Panc1 (cell line): ENCODE measurements at regions of chr2 and their contacts with region 1.

Region 1: GRCh38 chr2:191710411-191710900 is 32.5 kb downstream of the NABP1 start:
- DNase-seq: no peak
- ATAC-seq: no peak
- H3K4me3 ChIP-seq: no peak overlapping the region
- H3K27ac ChIP-seq: no peak overlapping the region
- H3K4me1 ChIP-seq: no peaks in the 10 kb centered on the region; the same call in 1 of the 2 replicates
- H3K27me3 ChIP-seq: peaks cover 5% of the 10 kb centered on the region
- CTCF ChIP-seq: no peak

Region 2: GRCh38 chr2:191521608-191522208 is 188.7 kb before region 1 on chr2:
- CTCF ChIA-PET with region 1: interaction called, 10 read pairs
- POLR2A ChIA-PET with region 1: no interaction called
- in situ Hi-C with region 1: no loop called
- intact Hi-C with region 1: no loop called
- DNase-seq: peak; percentile 51
- ATAC-seq: no peak
- H3K4me3 ChIP-seq: no peak overlapping the region
- H3K27ac ChIP-seq: no peak overlapping the region
- H3K4me1 ChIP-seq: no peaks in the 10 kb centered on the region
- H3K27me3 ChIP-seq: no peaks in the 10 kb centered on the region; the same call in 1 of the 2 replicates
- CTCF ChIP-seq: peak; percentile 81; the same call in 1 of the 2 replicates